ENCODE measurements at regions of chr20 and their contacts with region 1.

Region 1: DNA sequence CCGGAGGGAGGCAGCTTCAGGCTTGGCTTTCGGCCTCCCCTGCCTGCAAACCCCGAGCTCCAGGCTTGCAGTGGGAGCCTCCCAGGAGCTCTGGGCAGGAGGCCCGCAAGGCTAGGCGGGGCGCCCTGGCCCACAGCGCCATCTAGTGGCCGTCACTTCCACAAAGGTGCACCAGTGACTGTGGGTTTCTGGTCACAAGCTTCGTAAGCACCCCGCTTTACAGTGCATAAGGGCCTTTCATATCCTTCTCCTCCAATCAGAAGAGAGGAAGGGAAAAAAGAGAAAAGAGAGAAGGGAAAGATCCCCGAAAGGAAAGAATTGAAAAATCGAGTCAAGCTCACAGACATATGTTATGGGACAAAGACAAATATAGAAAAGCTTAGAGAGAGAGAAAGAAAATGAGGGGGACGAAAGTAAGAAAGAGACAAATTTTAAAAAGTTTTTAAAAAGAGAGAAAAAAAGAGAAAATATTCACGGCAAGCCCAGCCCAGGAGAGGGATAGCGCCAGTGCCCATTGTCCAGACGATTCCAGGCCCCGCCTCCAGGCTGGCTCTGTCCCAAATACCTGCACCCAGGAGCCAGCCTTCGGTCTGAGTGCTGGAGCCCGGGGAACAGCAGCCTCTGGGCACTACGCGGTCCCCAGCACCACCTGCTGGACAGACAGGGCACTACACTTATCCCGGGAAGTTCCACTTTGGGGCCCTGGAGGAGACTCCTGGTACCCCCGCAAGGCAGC is 207.1 kb downstream of the PREX1 start:
- DNase-seq: peak; percentile 90 to 97 (median 95)
- H3K4me3 ChIP-seq: peak overlapping the region; percentile 25
- H3K27ac ChIP-seq: peak overlapping the region; percentile 1 to 44
- H3K4me1 ChIP-seq: peaks cover 11% of the 10 kb centered on the region
- H3K27me3 ChIP-seq: no peaks in the 10 kb centered on the region
- CTCF ChIP-seq: peak; percentile 87 to 96 (median 91)
- EP300 ChIP-seq: no peak
- POLR2A ChIP-seq: no peak

Region 2: GRCh38 chr20:47663333-47664067 is 957.2 kb before region 1 on chr20:
- intact Hi-C with region 1: loop called (anchors 5 kb)
- DNase-seq: peak; percentile 75 to 90 (median 86)
- H3K4me3 ChIP-seq: no peak overlapping the region
- H3K27ac ChIP-seq: peak overlapping the region; percentile 3 to 25
- H3K4me1 ChIP-seq: peaks cover 10% of the 10 kb centered on the region
- H3K27me3 ChIP-seq: no peaks in the 10 kb centered on the region
- CTCF ChIP-seq: peak; percentile 85 to 96 (median 93)
- EP300 ChIP-seq: no peak
- POLR2A ChIP-seq: no peak

Region 3: GRCh38 chr20:47672166-47672565 is 948.5 kb before region 1 on chr20:
- intact Hi-C with region 1: loop called in 2 of 4 experiments (anchors 5 kb)
- DNase-seq: peak in 1 of 5 donors; percentile 15
- H3K4me3 ChIP-seq: no peak overlapping the region
- H3K27ac ChIP-seq: no peak overlapping the region
- H3K4me1 ChIP-seq: no peaks in the 10 kb centered on the region
- H3K27me3 ChIP-seq: no peaks in the 10 kb centered on the region
- CTCF ChIP-seq: no peak
- EP300 ChIP-seq: no peak
- POLR2A ChIP-seq: no peak

Region 4: GRCh38 chr20:47677635-47678453 is 942.8 kb before region 1 on chr20:
- intact Hi-C with region 1: loop called in 3 of 4 experiments (anchors 1 to 5 kb)
- DNase-seq: peak in 4 of 5 donors; percentile 39 to 68 (median 64)
- H3K4me3 ChIP-seq: no peak overlapping the region
- H3K27ac ChIP-seq: no peak overlapping the region
- H3K4me1 ChIP-seq: peaks cover 7% of the 10 kb centered on the region
- H3K27me3 ChIP-seq: no peaks in the 10 kb centered on the region
- CTCF ChIP-seq: peak; percentile 40 to 70 (median 56)
- EP300 ChIP-seq: no peak
- POLR2A ChIP-seq: no peak

Region 5: GRCh38 chr20:47960714-47961412 is 659.8 kb before region 1 on chr20:
- intact Hi-C with region 1: loop called in 1 of 4 experiments (anchors 10 kb)
- DNase-seq: no peak
- H3K4me3 ChIP-seq: no peak overlapping the region
- H3K27ac ChIP-seq: no peak overlapping the region
- H3K4me1 ChIP-seq: peaks cover 6% of the 10 kb centered on the region
- H3K27me3 ChIP-seq: no peaks in the 10 kb centered on the region
- CTCF ChIP-seq: no peak
- EP300 ChIP-seq: no peak
- POLR2A ChIP-seq: no peak

Region 6: DNA sequence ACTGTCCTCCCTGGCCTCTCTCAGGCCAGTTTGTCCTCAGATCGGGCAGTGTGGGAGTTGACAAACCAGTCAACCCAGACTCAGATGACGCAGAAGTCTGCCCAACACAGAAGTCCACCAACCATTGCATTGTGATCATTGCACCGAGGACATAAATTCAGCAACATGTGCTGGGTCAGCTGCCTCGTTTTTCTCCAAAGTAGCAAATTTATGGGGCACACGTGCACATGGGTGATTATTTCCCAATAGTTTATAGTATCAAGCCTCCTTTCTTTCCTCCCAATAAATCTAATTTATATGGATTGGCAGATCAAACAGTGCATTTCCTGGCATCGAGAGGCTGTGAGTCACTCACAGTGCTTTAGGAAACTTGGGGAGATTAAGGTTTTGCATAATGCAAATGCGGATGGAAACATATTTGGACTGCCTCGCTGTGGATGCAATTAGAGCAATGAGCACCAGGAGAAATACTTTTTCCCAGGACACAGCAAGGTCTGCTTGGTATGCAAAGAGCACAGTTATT is 421.7 kb before region 1 on chr20:
- intact Hi-C with region 1: loop called in 2 of 4 experiments (anchors 10 kb)
- DNase-seq: no peak
- H3K4me3 ChIP-seq: no peak overlapping the region
- H3K27ac ChIP-seq: no peak overlapping the region
- H3K4me1 ChIP-seq: peaks cover 4% of the 10 kb centered on the region
- H3K27me3 ChIP-seq: no peaks in the 10 kb centered on the region
- CTCF ChIP-seq: no peak
- EP300 ChIP-seq: peak; percentile 38
- POLR2A ChIP-seq: no peak

Region 7: GRCh38 chr20:48308882-48309281 is 311.8 kb before region 1 on chr20:
- intact Hi-C with region 1: loop called in 1 of 4 experiments (anchors 10 kb)
- DNase-seq: no peak
- H3K4me3 ChIP-seq: no peak overlapping the region
- H3K27ac ChIP-seq: peak overlapping the region in 1 of 2 donors; percentile 61
- H3K4me1 ChIP-seq: peaks cover 25% of the 10 kb centered on the region
- H3K27me3 ChIP-seq: no peaks in the 10 kb centered on the region
- CTCF ChIP-seq: no peak
- EP300 ChIP-seq: no peak
- POLR2A ChIP-seq: no peak